ENCODE measurements at regions of chr12 and their contacts with region 1.

Region 1: GRCh38 chr12:63103494-63104131 is 47.4 kb downstream of the AVPR1A start:
- DNase-seq: no peak
- H3K4me3 Mint-ChIP-seq: no peak overlapping the region
- H3K27ac Mint-ChIP-seq: no peak overlapping the region
- H3K4me1 Mint-ChIP-seq: no peaks in the 10 kb centered on the region
- H3K27me3 Mint-ChIP-seq: peaks cover 3% of the 10 kb centered on the region

Region 2: GRCh38 chr12:62522984-62523383 is 580.6 kb before region 1 on chr12:
- intact Hi-C with region 1: loop called (anchors 10 kb)
- DNase-seq: no peak
- H3K4me3 Mint-ChIP-seq: no peak overlapping the region
- H3K27ac Mint-ChIP-seq: peak overlapping the region; percentile 31
- H3K4me1 Mint-ChIP-seq: peaks cover 14% of the 10 kb centered on the region
- H3K27me3 Mint-ChIP-seq: no peaks in the 10 kb centered on the region

Region 3: GRCh38 chr12:63802012-63802608 is 698.5 kb after region 1 on chr12:
- intact Hi-C with region 1: loop called (anchors 5 kb)
- DNase-seq: no peak
- H3K4me3 Mint-ChIP-seq: no peak overlapping the region
- H3K27ac Mint-ChIP-seq: no peak overlapping the region
- H3K4me1 Mint-ChIP-seq: no peaks in the 10 kb centered on the region
- H3K27me3 Mint-ChIP-seq: no peaks in the 10 kb centered on the region

Region 4: DNA sequence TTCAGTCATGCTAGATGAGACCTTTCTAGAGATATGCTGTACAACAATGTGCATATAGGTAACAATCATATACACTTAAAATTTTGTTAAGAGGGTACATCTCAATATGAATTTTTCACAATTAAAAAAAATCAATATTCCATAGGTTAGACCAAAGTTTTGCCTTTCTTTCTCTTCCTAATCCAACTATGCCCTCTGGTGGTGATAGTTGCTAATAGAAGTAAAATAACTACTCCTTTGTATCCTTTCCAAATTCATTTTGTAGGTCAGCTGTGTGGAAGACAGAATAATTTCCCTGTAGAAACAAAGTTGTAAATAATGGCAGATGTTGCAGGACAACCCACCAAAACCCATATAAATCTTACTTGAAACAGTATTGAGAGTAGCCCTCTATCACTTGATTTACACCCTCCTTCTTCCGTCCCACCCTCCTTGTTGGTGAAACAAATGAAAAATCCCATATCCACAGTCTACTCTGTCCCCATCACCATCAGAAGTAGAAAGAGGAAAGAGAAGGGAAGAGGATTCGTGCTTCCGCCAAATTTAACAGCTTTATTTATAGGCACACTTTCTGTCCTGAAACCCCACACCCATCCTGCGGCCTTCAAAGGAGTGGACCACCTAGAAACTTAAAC is 1152.7 kb after region 1 on chr12:
- intact Hi-C with region 1: loop called (anchors 1 kb)
- DNase-seq: no peak
- H3K4me3 Mint-ChIP-seq: no peak overlapping the region
- H3K27ac Mint-ChIP-seq: no peak overlapping the region
- H3K4me1 Mint-ChIP-seq: no peaks in the 10 kb centered on the region
- H3K27me3 Mint-ChIP-seq: peaks cover 5% of the 10 kb centered on the region

Measured in activated T-helper 1 cell treated with anti-CD3 and anti-CD28 coated beads, Interleukin-12 subunit alpha, Interleukin-12 subunit beta, Interleukin-2, Interleukin-4 antibody, amounts not matched to agents 30 ng/mL and 10 ng/mL and 1 ng/mL, durations not matched to agents 14 hours and 24 hours and 36 hours (primary cell).